Activated CD8-positive, alpha-beta T cell treated with anti-CD3 and anti-CD28 coated beads, Interleukin-2, amount 10 ng/mL, durations not matched to agents 7 days and 5 days (primary cell): ENCODE measurements at regions of chr12 and their contacts with region 1.

Region 1: GRCh38 chr12:4857472-4858291 is 52.0 kb upstream of the KCNA1 start:
- DNase-seq: peak; percentile 83
- ATAC-seq: peak; percentile 83
- H3K4me3 Mint-ChIP-seq: peak overlapping the region; percentile 47
- H3K27ac Mint-ChIP-seq: no peak overlapping the region
- H3K4me1 Mint-ChIP-seq: peaks cover 21% of the 10 kb centered on the region
- H3K27me3 Mint-ChIP-seq: peaks cover 17% of the 10 kb centered on the region

Region 2: GRCh38 chr12:4817836-4818235 is 39.8 kb before region 1 on chr12:
- CTCF ChIA-PET with region 1: interaction called, 39 read pairs
- POLR2A ChIA-PET with region 1: no interaction called
- DNase-seq: no peak
- ATAC-seq: no peak
- H3K4me3 Mint-ChIP-seq: no peak overlapping the region
- H3K27ac Mint-ChIP-seq: no peak overlapping the region
- H3K4me1 Mint-ChIP-seq: peaks cover 19% of the 10 kb centered on the region
- H3K27me3 Mint-ChIP-seq: peaks cover 6% of the 10 kb centered on the region

Region 3: GRCh38 chr12:4870423-4870822 is 12.7 kb after region 1 on chr12:
- CTCF ChIA-PET with region 1: interaction called, 11 read pairs
- POLR2A ChIA-PET with region 1: no interaction called
- DNase-seq: no peak
- ATAC-seq: no peak
- H3K4me3 Mint-ChIP-seq: no peak overlapping the region
- H3K27ac Mint-ChIP-seq: no peak overlapping the region
- H3K4me1 Mint-ChIP-seq: no peaks in the 10 kb centered on the region
- H3K27me3 Mint-ChIP-seq: peaks cover 20% of the 10 kb centered on the region

Region 4: DNA sequence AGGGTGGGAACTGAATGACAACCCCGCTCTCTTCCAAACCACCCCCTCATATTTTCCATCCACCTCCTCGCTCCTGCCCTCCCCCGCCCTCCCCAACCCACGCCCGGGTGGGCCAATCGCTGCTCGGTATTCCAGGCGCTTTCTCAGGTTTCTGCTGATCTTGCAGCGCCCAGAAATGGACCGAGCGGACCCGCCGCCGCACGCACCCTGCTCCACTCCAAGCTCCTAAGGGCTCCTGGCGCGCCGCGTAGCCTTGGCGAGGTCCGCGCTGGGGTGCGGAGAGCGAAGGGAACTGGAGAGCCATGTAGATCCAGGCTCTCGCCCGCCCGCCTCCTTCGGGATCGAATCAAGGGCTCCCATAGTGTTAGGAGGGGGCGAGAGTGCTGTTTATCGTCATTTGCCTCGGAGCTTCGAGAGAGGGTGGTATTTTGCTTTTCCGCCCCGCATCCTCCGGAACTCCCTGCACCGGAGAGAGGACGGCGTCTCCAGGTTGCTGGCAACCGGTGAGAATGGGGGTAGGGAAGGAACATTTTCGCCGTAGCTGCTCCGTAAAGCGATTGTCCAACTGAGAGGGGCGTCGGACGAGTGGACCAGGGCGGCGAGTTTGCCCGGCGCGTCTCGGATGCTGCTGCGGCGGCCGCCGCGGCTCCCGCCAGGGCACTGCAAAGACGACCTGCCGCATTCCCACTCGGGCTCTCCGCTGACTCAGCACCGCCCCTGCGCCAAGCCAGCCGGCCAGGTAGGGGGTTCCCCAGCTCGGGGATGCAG is 52.2 kb after region 1 on chr12 and contains the start of gene KCNA1:
- CTCF ChIA-PET with region 1: interaction called, 12 read pairs
- POLR2A ChIA-PET with region 1: no interaction called
- DNase-seq: no peak
- ATAC-seq: peak; percentile 46
- H3K4me3 Mint-ChIP-seq: peak within 1 kb of the TSS; percentile 78
- H3K27ac Mint-ChIP-seq: peak within 1 kb of the TSS; percentile 44
- H3K4me1 Mint-ChIP-seq: peaks cover 12% of the 10 kb centered on the region
- H3K27me3 Mint-ChIP-seq: peaks cover 36% of the 10 kb centered on the region
- total RNA-seq, gene KCNA1: not detected

Region 5: GRCh38 chr12:5083955-5084849 is 226.5 kb after region 1 on chr12:
- CTCF ChIA-PET with region 1: interaction called, 13 read pairs
- POLR2A ChIA-PET with region 1: no interaction called
- DNase-seq: peak; percentile 42
- ATAC-seq: no peak
- H3K4me3 Mint-ChIP-seq: no peak overlapping the region
- H3K27ac Mint-ChIP-seq: no peak overlapping the region
- H3K4me1 Mint-ChIP-seq: no peaks in the 10 kb centered on the region
- H3K27me3 Mint-ChIP-seq: no peaks in the 10 kb centered on the region

Region 6: GRCh38 chr12:5473076-5473782 is 615.5 kb after region 1 on chr12:
- CTCF ChIA-PET with region 1: no interaction called
- POLR2A ChIA-PET with region 1: no interaction called
- DNase-seq: no peak
- ATAC-seq: no peak
- H3K4me3 Mint-ChIP-seq: no peak overlapping the region
- H3K27ac Mint-ChIP-seq: no peak overlapping the region
- H3K4me1 Mint-ChIP-seq: no peaks in the 10 kb centered on the region
- H3K27me3 Mint-ChIP-seq: peaks cover 3% of the 10 kb centered on the region